Mammary epithelial cell (primary cell): ENCODE measurements at regions of chr17 and their contacts with region 1.

Region 1: DNA sequence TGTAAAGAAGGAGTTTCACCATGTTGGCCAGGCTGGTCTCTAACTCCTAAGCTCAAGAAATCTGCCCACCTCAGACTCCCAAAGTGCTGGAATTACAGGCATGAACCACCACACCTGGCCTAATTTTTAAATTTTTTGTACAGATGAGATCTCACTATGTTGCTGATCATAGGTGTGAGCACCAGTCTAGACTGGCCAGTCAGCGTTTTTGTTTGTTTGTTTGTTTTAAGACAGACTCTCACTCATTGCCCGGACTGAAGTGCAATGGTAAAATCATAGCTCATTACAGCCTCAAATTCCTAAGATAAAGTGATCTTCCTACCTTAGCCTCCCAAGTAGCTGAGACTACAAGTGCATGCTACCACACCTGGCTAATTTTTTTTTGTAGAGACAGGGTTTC is 38.0 kb upstream of the TAOK1 start:
- DNase-seq: no peak
- H3K4me3 ChIP-seq: no peak overlapping the region
- H3K27ac ChIP-seq: no peak overlapping the region
- H3K4me1 ChIP-seq: no peaks in the 10 kb centered on the region
- H3K27me3 ChIP-seq: no peaks in the 10 kb centered on the region
- CTCF ChIP-seq: no peak

Region 2: DNA sequence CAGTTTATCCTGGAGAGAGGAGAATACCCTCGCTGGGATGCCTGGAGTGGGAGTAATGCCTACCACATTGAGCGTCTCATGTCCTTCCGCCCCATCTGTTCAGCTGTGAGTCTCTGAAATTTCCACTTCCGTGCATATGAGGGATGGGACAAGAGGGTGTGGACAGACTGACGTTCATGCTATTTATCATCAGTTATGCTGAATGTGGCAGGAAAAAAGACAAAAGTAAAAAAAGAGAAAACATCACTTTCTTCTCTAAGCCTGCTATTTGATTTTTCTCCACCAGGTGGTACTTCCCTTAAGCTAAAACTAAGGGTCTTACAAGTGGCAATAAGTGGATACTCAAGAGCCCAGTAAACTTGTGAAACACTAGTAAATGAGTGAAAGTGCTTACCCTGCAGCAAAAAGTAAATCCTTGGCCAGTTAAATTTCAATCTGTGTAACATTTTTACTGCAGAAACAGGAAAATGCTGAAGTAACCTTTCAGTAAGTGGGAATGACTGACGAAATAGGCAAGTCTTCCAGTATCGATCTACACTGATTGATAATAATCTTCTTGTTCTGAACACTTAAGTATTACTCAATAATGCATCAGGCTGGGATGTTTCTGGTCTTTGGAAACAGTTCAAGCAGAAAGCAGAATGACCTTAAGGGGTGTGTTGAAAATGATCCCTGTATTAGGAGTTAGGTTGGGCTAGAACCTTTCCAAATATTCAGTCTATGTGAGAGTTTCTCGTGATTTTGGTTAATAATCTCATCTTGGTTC is 99.9 kb before region 1 on chr17:
- CTCF ChIA-PET with region 1: no interaction called
- dilution Hi-C with region 1: no loop called
- in situ Hi-C with region 1: no loop called
- intact Hi-C with region 1: loop called (anchors 5 kb)
- DNase-seq: no peak
- H3K4me3 ChIP-seq: no peak overlapping the region
- H3K27ac ChIP-seq: no peak overlapping the region
- H3K4me1 ChIP-seq: peaks cover 7% of the 10 kb centered on the region
- H3K27me3 ChIP-seq: no peaks in the 10 kb centered on the region
- CTCF ChIP-seq: peak; percentile 37 to 47

Region 3: DNA sequence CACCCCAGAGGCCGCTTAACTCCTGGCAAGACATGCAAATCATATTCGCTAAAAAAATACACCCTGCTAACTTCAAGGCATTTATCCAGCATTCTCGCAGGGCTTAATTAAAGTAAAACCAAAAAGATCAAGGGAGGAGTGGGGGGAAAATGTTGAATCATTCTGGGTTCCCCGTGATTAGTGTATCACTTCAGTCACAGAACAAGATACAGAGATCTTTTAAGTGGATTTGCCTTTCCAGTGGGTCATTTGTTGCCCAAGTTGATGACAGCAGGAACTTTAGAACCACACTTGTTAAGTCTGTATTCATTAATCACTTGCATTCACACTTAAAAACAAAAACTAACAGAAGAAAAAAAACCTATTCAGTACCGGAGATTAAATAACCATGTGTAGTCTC is 88.2 kb before region 1 on chr17:
- CTCF ChIA-PET with region 1: no interaction called
- dilution Hi-C with region 1: no loop called
- in situ Hi-C with region 1: no loop called
- intact Hi-C with region 1: no loop called
- DNase-seq: no peak
- H3K4me3 ChIP-seq: no peak overlapping the region
- H3K27ac ChIP-seq: no peak overlapping the region
- H3K4me1 ChIP-seq: no peaks in the 10 kb centered on the region
- H3K27me3 ChIP-seq: no peaks in the 10 kb centered on the region
- CTCF ChIP-seq: no peak

Region 4: DNA sequence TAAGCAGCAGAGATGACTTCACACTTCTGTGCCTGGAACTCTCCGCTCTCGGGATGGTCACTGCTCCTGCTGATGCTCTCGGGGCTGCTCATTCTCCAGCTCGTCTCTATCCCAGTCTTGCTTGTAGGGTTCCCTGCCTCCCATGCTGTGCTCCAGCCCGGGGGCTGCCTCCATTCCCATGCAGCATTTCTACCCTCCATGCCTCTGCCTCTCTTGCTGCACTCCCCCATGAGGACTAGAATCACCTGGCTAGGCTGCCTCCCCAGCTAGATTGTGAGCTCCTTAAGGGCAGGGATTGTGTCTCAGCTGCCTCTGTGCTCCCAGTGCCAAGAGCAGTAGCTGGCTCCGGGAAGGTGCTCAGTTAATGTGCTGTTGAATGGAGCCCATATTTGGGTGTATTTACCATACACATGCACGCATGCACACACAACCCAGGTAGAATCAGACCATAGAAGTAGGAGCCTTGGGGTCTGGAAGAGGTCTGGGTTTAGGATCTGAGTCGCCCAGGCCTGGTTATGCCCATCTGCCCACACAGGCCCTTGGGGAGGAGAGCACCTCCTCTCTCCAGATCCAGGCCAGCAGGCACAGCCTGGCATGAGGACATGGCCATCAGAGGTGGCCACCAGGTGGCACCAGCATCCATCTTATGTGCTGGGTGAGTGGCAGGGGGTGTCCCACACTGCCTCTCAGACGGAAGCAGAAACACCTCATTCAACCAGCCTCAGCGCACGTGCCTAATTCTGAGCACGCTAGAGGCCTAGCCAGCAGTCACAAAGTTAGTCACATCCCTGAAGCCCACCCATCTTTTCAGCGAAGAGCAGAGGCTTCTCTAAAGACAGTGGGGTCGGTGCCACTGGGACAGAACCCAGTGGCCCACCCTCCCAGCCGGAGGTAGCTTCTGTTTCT is 228.0 kb after region 1 on chr17:
- CTCF ChIA-PET with region 1: no interaction called
- dilution Hi-C with region 1: no loop called
- in situ Hi-C with region 1: no loop called
- intact Hi-C with region 1: no loop called
- DNase-seq: peak; percentile 73
- H3K4me3 ChIP-seq: no peak overlapping the region
- H3K27ac ChIP-seq: no peak overlapping the region
- H3K4me1 ChIP-seq: peaks cover 50% of the 10 kb centered on the region
- H3K27me3 ChIP-seq: no peaks in the 10 kb centered on the region
- CTCF ChIP-seq: peak; percentile 80 to 97